Calu3 (cell line): ENCODE measurements at regions of chr16 and their contacts with region 1.

Region 1: GRCh38 chr16:9008601-9009260 is 45.0 kb upstream of the USP7 start:
- DNase-seq: peak; percentile 91
- H3K4me3 Mint-ChIP-seq: peak overlapping the region; percentile 64
- H3K27ac Mint-ChIP-seq: no peak overlapping the region
- H3K4me1 Mint-ChIP-seq: no peaks in the 10 kb centered on the region
- H3K27me3 Mint-ChIP-seq: peaks cover 11% of the 10 kb centered on the region
- CTCF ChIP-seq: peak; percentile 90

Region 2: GRCh38 chr16:8905168-8905762 is 103.5 kb before region 1 on chr16:
- CTCF ChIA-PET with region 1: interaction called, 3 read pairs
- intact Hi-C with region 1: loop called (anchors 5 kb)
- DNase-seq: peak; percentile 29
- H3K4me3 Mint-ChIP-seq: no peak overlapping the region
- H3K27ac Mint-ChIP-seq: no peak overlapping the region
- H3K4me1 Mint-ChIP-seq: peaks cover 1% of the 10 kb centered on the region
- H3K27me3 Mint-ChIP-seq: no peaks in the 10 kb centered on the region
- CTCF ChIP-seq: no peak

Region 3: DNA sequence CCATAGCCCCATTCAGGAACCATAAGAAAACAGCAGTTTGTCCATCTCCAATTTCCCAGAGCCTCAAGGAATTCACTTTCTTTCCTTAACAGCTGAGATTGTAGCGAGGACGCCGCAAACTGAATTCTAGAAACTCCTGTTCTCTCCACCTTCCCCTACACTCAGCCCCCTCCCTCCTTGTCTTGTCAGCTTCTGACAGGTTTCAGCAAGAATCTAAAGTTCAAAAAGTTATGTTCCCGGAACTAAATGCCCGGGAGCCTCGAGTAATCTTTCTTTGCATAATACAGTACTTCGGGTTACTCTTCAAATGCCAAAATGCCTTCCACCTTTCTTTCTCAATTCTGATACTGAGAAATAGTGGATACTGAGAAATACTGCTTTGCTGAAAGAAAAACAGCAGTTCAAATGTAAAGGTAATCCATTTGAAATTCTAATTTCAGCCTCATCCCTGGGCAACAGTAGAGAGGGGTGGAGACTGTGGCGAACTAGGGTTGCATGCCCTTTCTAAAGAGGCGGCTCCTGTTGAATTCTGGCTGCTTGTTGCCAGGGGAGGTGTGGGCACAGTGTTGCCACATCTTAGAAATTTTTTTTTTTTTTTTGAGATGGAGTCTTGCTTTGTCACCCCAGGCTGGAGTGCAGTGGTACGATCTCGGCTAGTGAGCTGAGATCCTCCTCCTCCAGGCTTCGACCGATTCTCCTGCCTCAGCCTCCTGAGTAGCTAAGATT is 18.5 kb after region 1 on chr16:
- CTCF ChIA-PET with region 1: interaction called, 10 read pairs
- intact Hi-C with region 1: no loop called
- DNase-seq: no peak
- H3K4me3 Mint-ChIP-seq: no peak overlapping the region
- H3K27ac Mint-ChIP-seq: no peak overlapping the region
- H3K4me1 Mint-ChIP-seq: peaks cover 7% of the 10 kb centered on the region
- H3K27me3 Mint-ChIP-seq: no peaks in the 10 kb centered on the region
- CTCF ChIP-seq: no peak

Region 4: GRCh38 chr16:9047686-9048301 is 39.1 kb after region 1 on chr16:
- CTCF ChIA-PET with region 1: interaction called, 11 read pairs
- intact Hi-C with region 1: no loop called
- DNase-seq: peak; percentile 84
- H3K4me3 Mint-ChIP-seq: peak overlapping the region; percentile 16
- H3K27ac Mint-ChIP-seq: peak overlapping the region; percentile 72
- H3K4me1 Mint-ChIP-seq: peaks cover 23% of the 10 kb centered on the region
- H3K27me3 Mint-ChIP-seq: no peaks in the 10 kb centered on the region
- CTCF ChIP-seq: no peak

Region 5: DNA sequence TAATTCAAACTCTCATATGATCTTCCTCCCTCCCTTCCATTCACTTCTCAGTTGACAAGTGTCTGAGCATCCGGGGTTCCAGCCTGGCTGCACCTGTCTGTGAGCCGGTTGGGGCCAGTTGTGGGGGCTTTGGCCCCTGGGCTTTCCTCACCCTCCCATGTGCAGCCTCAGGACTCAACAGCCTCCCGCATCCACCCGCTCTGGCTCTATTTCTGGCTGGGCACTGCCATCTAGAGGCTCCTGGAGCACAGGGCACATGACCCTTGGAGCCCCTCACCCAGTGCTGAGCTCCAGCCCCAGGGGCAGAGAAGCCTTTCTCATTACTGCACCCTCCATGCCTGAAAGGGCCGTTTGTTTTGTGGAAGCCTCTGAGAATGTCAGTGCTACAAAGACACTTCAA is 126.0 kb after region 1 on chr16:
- CTCF ChIA-PET with region 1: interaction called, 11 read pairs
- intact Hi-C with region 1: no loop called
- DNase-seq: peak; percentile 78
- H3K4me3 Mint-ChIP-seq: no peak overlapping the region
- H3K27ac Mint-ChIP-seq: no peak overlapping the region
- H3K4me1 Mint-ChIP-seq: peaks cover 8% of the 10 kb centered on the region
- H3K27me3 Mint-ChIP-seq: peaks cover 16% of the 10 kb centered on the region
- CTCF ChIP-seq: peak; percentile 75